ENCODE measurements at regions of chr3 and their contacts with region 1.

Region 1: DNA sequence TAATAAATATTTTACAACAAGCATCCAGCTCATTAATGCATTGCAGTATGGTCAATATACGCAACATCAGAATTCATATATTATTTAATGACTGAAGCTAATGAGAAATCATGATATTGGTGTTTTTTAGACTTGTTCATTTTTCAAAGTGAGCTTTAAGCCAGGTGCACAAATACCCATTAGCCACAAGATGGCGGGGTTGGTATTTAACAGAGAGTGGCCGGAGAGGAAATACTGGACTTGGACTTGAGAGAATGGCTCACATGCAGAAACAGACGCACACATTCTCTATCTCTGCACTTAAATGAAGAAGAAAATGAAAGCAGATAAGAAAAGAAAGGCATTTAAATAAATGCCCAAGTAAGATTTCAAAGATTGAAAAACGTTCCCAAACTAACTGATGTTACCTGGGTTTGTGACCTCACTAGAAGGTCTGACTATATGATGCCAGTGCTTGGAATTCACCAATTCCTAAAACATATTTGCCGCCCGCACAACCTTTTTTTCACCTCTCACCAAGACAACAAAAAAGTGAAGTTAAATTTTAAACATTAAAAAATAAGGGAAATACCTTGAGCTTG is 21.2 kb upstream of the CRBN start:
- DNase-seq: peak; percentile 21 to 68
- ATAC-seq: peak; percentile 64 to 85; a peak in 3 of 6 replicates
- H3K4me3 ChIP-seq: no peak overlapping the region
- H3K27ac ChIP-seq: no peak overlapping the region
- H3K4me1 ChIP-seq: no peaks in the 10 kb centered on the region
- CTCF ChIP-seq: peak; percentile 75
- EP300 ChIP-seq: no peak
- POLR2A ChIP-seq: no peak
- RAD21 ChIP-seq: peak; percentile 76 to 86

Region 2: DNA sequence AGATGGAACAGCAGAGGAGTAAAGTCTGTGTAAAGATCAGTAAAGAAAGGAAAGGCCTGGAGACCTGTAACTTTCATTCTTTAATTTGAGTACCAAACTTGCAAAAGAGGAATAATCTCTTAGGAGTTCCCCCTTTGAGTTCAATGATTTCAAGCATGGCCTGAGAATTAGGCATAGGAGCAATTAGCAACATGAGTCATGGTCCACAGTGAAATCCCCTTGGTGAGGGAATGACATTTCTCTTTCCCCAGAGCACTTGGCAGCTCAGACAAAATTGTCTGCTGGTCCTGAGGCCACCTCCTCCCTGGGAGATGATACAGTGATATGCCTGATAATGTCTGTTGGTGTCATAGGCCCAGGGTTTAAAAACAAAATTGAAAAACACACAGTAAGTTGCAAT is 60.1 kb after region 1 on chr3:
- CTCF ChIA-PET with region 1: no interaction called
- POLR2A ChIA-PET with region 1: no interaction called
- DNase-seq: no peak
- ATAC-seq: no peak
- H3K4me3 ChIP-seq: no peak overlapping the region
- H3K27ac ChIP-seq: no peak overlapping the region
- H3K4me1 ChIP-seq: no peaks in the 10 kb centered on the region
- CTCF ChIP-seq: no peak
- EP300 ChIP-seq: no peak
- POLR2A ChIP-seq: no peak
- RAD21 ChIP-seq: no peak

Region 3: DNA sequence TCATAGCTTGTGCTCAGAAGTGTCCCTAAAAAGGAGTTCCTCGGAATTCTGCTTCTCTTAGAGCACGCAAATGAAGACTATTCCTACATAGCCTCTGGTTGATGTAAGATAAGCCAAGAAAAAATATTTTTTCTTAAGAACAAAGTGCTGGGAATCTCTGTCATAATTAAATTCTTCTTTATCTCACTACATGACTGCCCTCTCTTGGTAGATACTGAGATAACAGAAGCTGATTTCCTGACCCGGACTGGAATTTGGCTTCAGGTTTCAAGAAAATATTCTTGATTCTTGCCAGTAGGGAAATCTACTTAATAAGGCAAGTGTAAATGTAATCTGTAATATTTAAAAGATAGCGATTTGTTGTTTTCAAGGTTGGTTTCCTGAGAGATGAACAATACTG is 1071.1 kb after region 1 on chr3:
- CTCF ChIA-PET with region 1: interaction called, 19 read pairs
- POLR2A ChIA-PET with region 1: interaction called, 3 read pairs
- DNase-seq: peak; percentile 28 to 47
- ATAC-seq: peak; percentile 47 to 70; a peak in 3 of 6 replicates
- H3K4me3 ChIP-seq: no peak overlapping the region
- H3K27ac ChIP-seq: no peak overlapping the region
- H3K4me1 ChIP-seq: no peaks in the 10 kb centered on the region
- CTCF ChIP-seq: peak; percentile 54
- EP300 ChIP-seq: no peak
- POLR2A ChIP-seq: no peak
- RAD21 ChIP-seq: peak; percentile 62 to 68

Region 4: DNA sequence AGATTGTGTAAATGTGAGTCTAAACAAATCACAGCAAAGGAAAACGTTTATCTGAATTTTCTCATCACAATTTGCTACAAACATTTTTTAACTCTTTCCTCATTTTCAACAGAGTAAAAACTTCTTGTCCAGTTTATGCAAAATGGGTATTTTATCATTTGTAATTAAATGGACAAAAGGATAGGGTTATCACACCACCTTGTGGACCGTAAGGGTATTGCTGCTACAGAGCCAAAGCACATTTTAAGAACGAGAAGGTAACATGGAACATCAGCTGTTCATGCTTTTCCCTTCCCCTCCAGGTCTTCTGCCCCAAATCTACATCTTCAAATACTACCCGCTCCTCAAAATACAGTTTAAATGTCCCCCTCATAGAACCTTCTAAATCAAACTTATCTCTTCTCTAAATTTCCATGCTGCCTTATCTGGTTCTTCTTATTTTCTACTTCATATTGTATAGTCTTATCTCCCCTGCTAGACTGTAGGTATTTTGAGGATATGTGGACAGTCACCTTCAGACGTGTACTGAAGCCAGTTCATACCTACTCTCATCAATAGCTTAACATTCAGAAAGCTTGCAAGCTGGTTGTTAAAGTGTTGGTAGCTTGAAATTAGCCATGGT is 1089.7 kb after region 1 on chr3:
- CTCF ChIA-PET with region 1: interaction called, 27 read pairs
- POLR2A ChIA-PET with region 1: no interaction called
- DNase-seq: peak; percentile 16 to 48
- ATAC-seq: peak; percentile 61 to 75; a peak in 4 of 6 replicates
- H3K4me3 ChIP-seq: no peak overlapping the region
- H3K27ac ChIP-seq: no peak overlapping the region
- H3K4me1 ChIP-seq: no peaks in the 10 kb centered on the region
- CTCF ChIP-seq: peak; percentile 77
- EP300 ChIP-seq: no peak
- POLR2A ChIP-seq: no peak
- RAD21 ChIP-seq: peak; percentile 75 to 77